Esophagus squamous epithelium (tissue), 5 donors: ENCODE measurements at regions of chr18 and their contacts with region 1.

Region 1: GRCh38 chr18:13318731-13319501 is 100.4 kb downstream of the LDLRAD4 start:
- DNase-seq: no peak
- H3K4me3 ChIP-seq: no peak overlapping the region
- H3K27ac ChIP-seq: peak overlapping the region in 2 of 4 donors; percentile 9 to 16
- H3K4me1 ChIP-seq: peaks cover 0 to 6% (median 0%) of the 10 kb centered on the region in 3 donors
- H3K27me3 ChIP-seq: no peaks in the 10 kb centered on the region
- CTCF ChIP-seq: no peak
- POLR2A ChIP-seq: no peak

Region 2: DNA sequence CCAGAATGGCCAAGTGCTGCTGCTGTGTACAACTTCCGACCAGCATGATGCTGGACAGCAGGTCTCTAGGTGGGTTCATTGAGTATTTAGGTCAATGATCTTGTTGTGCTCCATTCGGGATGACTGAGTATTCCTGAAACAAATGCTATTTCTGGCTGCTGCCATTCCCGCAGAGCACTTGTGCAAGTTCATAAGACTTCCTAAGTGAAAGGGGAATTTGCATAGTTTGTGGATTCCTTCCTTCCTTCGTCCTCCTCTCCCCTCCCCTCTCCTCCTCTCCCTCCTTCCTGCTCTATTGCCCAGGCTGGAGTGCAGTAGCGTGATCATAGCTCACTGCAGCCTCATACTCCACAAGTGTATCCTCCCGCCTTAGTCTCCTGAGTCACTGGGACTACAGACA is 60.0 kb before region 1 on chr18:
- intact Hi-C with region 1: loop called (anchors 10 kb)
- DNase-seq: no peak
- H3K4me3 ChIP-seq: no peak overlapping the region
- H3K27ac ChIP-seq: peak overlapping the region in 2 of 4 donors; percentile 49 to 80
- H3K4me1 ChIP-seq: peaks cover 13 to 55% (median 32%) of the 10 kb centered on the region in 3 donors
- H3K27me3 ChIP-seq: no peaks in the 10 kb centered on the region
- CTCF ChIP-seq: no peak
- POLR2A ChIP-seq: no peak

Region 3: GRCh38 chr18:13530033-13530878 is 211.3 kb after region 1 on chr18:
- intact Hi-C with region 1: no loop called
- DNase-seq: no peak
- H3K4me3 ChIP-seq: no peak overlapping the region
- H3K27ac ChIP-seq: peak overlapping the region in 1 of 4 donors; percentile 25
- H3K4me1 ChIP-seq: peaks cover 0 to 7% (median 0%) of the 10 kb centered on the region in 3 donors
- H3K27me3 ChIP-seq: no peaks in the 10 kb centered on the region
- CTCF ChIP-seq: no peak
- POLR2A ChIP-seq: no peak

Region 4: GRCh38 chr18:13868501-13869271 is 549.8 kb after region 1 on chr18:
- intact Hi-C with region 1: no loop called
- DNase-seq: no peak
- H3K4me3 ChIP-seq: no peak overlapping the region
- H3K27ac ChIP-seq: no peak overlapping the region
- H3K4me1 ChIP-seq: peaks cover 0 to 7% (median 0%) of the 10 kb centered on the region in 3 donors
- H3K27me3 ChIP-seq: peaks cover 0 to 60% (median 0%) of the 10 kb centered on the region in 4 donors
- CTCF ChIP-seq: no peak
- POLR2A ChIP-seq: no peak